ENCODE measurements at regions of chr2 and their contacts with region 1.

Region 1: DNA sequence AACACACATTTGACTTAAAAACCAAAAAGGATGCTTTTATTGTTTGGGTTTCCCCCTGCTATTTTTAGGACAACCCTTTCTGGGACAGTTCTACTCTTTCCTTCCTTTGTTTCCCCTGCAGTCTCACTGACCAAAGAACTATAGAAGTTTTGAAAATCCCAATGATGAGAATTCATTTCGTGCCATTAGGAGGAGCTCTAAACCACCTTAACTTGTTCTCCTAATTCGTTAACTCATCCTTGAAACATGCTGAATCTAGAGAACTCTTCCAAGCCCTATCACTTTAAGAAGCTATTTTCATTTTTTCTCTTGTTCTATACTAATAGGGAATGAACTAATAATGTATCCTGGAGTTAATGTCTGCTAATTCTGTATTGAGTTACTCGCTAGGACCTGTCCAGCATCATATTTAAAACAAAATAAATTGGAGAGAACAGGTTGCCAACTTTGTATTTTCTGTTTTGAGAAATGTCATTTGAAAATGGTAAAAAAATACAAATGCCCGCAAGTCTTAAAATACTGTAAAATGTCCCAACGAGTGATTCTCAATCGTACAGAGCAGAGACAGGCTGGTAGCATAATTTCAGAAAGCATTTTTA is 62.9 kb downstream of the AFTPH start:
- DNase-seq: no peak
- H3K4me3 Mint-ChIP-seq: no peak overlapping the region
- H3K27ac Mint-ChIP-seq: no peak overlapping the region
- H3K4me1 Mint-ChIP-seq: peaks cover 10% of the 10 kb centered on the region
- H3K27me3 Mint-ChIP-seq: no peaks in the 10 kb centered on the region

Region 2: GRCh38 chr2:64779117-64779690 is 192.2 kb after region 1 on chr2:
- CTCF ChIA-PET with region 1: no interaction called
- POLR2A ChIA-PET with region 1: no interaction called
- intact Hi-C with region 1: no loop called
- DNase-seq: no peak
- H3K4me3 Mint-ChIP-seq: no peak overlapping the region
- H3K27ac Mint-ChIP-seq: no peak overlapping the region
- H3K4me1 Mint-ChIP-seq: no peaks in the 10 kb centered on the region
- H3K27me3 Mint-ChIP-seq: no peaks in the 10 kb centered on the region

Region 3: DNA sequence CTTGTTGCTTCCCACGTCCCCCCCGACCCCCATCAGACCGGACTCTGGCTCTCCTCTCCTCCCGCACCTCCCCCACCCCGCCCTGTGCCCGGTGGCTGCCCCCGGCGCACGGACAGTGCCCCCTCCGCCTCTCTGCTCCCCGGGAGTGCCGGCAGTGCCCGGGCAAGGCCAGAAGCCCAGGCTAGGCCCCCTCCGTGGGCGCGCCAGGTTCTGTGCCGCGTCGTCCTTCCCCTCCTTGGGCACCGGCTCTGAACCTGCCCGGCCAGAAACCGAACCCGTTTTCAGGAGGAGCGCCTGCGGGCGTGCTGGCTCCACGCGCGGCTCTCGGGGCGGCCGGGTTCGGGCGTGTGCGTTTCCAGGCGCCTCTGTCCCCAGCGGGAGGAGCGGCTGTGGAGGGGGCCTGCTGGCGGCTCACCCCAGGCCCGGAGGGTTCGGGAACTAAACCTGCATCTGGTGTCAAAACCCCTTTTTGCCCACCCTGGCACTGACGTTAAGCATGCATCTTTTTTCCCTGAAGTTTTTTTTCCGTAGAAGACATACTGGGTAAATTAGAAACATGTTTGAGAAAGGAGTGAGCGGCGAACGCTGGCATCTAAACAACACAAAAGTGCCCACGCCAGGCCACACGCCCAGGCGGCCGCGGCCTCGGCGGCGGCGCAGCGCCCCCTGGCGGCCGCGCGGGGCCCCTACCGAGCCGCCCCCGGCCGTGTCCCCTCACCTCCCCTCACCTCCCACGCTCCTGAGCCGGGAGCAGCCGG is 278.3 kb after region 1 on chr2:
- CTCF ChIA-PET with region 1: interaction called, 12 read pairs
- POLR2A ChIA-PET with region 1: no interaction called
- intact Hi-C with region 1: loop called (anchors 2 kb)
- DNase-seq: peak; percentile 72
- H3K4me3 Mint-ChIP-seq: peak overlapping the region; percentile 57
- H3K27ac Mint-ChIP-seq: no peak overlapping the region
- H3K4me1 Mint-ChIP-seq: no peaks in the 10 kb centered on the region
- H3K27me3 Mint-ChIP-seq: peaks cover 5% of the 10 kb centered on the region

Region 4: GRCh38 chr2:64873472-64873924 is 286.5 kb after region 1 on chr2:
- CTCF ChIA-PET with region 1: interaction called, 11 read pairs
- POLR2A ChIA-PET with region 1: no interaction called
- intact Hi-C with region 1: loop called (anchors 1 kb)
- DNase-seq: peak; percentile 89
- H3K4me3 Mint-ChIP-seq: peak overlapping the region; percentile 23
- H3K27ac Mint-ChIP-seq: no peak overlapping the region
- H3K4me1 Mint-ChIP-seq: peaks cover 7% of the 10 kb centered on the region
- H3K27me3 Mint-ChIP-seq: peaks cover 2% of the 10 kb centered on the region

Region 5: GRCh38 chr2:64899081-64899865 is 312.3 kb after region 1 on chr2:
- CTCF ChIA-PET with region 1: no interaction called
- POLR2A ChIA-PET with region 1: no interaction called
- intact Hi-C with region 1: no loop called
- DNase-seq: no peak
- H3K4me3 Mint-ChIP-seq: no peak overlapping the region
- H3K27ac Mint-ChIP-seq: no peak overlapping the region
- H3K4me1 Mint-ChIP-seq: peaks cover 8% of the 10 kb centered on the region
- H3K27me3 Mint-ChIP-seq: peaks cover 6% of the 10 kb centered on the region

Measured in activated CD4-positive, alpha-beta memory T cell treated with anti-CD3 and anti-CD28 coated beads for 36 hours (primary cell).